ENCODE measurements at regions of chr14 and their contacts with region 1.

Region 1: GRCh38 chr14:57533214-57533613 is 39.6 kb upstream of the CCDC198 start:
- DNase-seq: no peak
- H3K4me3 Mint-ChIP-seq: no peak overlapping the region
- H3K27ac Mint-ChIP-seq: no peak overlapping the region
- H3K4me1 Mint-ChIP-seq: no peaks in the 10 kb centered on the region
- H3K27me3 Mint-ChIP-seq: no peaks in the 10 kb centered on the region

Region 2: GRCh38 chr14:57435923-57436322 is 97.3 kb before region 1 on chr14:
- intact Hi-C with region 1: no loop called
- DNase-seq: no peak
- H3K4me3 Mint-ChIP-seq: no peak overlapping the region
- H3K27ac Mint-ChIP-seq: no peak overlapping the region
- H3K4me1 Mint-ChIP-seq: no peaks in the 10 kb centered on the region
- H3K27me3 Mint-ChIP-seq: peaks cover 8% of the 10 kb centered on the region

Region 3: DNA sequence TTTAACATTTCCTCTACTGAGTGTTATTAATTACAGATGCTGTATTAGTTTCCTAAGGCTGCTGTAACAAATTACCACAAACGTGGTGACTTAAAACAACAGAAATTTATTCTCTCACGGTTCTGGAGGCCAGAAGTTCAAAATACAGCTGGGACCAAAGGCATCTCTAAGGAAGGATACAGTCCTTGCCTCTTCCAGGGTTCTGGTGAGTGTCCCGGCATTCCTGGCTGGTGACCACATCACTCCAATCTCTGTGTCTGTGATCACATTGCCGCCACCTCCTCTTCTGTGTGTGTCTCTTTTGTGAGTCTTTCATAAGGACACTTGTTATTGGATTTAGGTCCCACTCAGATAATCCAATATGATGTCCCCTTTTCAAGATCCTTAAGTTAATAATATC is 45.6 kb after region 1 on chr14:
- intact Hi-C with region 1: no loop called
- DNase-seq: no peak
- H3K4me3 Mint-ChIP-seq: no peak overlapping the region
- H3K27ac Mint-ChIP-seq: no peak overlapping the region
- H3K4me1 Mint-ChIP-seq: no peaks in the 10 kb centered on the region
- H3K27me3 Mint-ChIP-seq: peaks cover 2% of the 10 kb centered on the region

Region 4: DNA sequence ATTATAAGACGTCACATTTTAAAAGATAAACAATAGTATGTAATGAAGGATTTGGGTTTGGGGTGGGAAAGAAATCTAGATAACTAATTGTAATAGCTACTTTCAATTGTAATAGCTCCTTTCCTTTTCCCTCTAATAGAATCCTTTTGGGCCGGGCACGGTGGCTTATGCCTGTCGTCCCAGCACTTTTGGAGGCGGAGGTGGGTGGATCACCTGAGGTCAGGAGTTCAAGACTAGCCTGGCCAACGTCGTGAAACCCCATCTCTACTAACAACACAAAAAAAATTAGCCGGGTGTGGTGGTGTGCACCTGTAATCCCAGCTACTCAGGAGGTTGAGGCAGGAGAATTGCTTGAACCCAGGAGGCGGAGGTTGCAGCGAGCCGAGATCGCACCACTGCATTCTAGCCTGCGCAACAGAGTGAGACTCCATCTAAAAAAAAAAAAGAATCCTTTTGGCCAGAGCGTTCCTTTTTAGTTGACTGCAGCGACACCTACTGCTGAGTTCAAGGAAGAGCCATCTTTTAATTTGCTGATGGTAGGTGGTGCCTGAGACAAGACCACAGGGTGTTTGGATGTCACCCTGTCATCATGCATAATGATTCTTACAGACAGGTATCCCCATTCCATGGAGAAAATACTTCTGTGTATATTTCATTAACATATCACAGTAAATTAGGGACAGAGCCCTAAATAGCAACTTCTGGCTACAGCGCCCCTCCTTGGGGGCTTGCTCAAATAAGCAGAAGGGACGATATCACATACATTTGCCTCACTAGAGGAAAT is 539.3 kb after region 1 on chr14:
- intact Hi-C with region 1: loop called (anchors 1 kb)
- DNase-seq: peak; percentile 22
- H3K4me3 Mint-ChIP-seq: no peak overlapping the region
- H3K27ac Mint-ChIP-seq: no peak overlapping the region
- H3K4me1 Mint-ChIP-seq: no peaks in the 10 kb centered on the region
- H3K27me3 Mint-ChIP-seq: peaks cover 2% of the 10 kb centered on the region

Region 5: GRCh38 chr14:58166005-58166983 is 633.1 kb after region 1 on chr14:
- intact Hi-C with region 1: loop called (anchors 5 kb)
- DNase-seq: peak; percentile 40
- H3K4me3 Mint-ChIP-seq: no peak overlapping the region
- H3K27ac Mint-ChIP-seq: no peak overlapping the region
- H3K4me1 Mint-ChIP-seq: peaks cover 9% of the 10 kb centered on the region
- H3K27me3 Mint-ChIP-seq: peaks cover 10% of the 10 kb centered on the region

Measured in activated T-helper 1 cell treated with anti-CD3 and anti-CD28 coated beads, Interleukin-12 subunit alpha, Interleukin-12 subunit beta, Interleukin-2, Interleukin-4 antibody, amounts not matched to agents 30 ng/mL and 10 ng/mL and 1 ng/mL, durations not matched to agents 14 hours and 24 hours and 36 hours (primary cell).